Panc1 (cell line): ENCODE measurements at regions of chr9 and their contacts with region 1.

Region 1: GRCh38 chr9:100590481-100590880 is 12.6 kb downstream of the CAVIN4 start:
- DNase-seq: no peak
- ATAC-seq: no peak
- H3K4me3 ChIP-seq: no peak overlapping the region
- H3K27ac ChIP-seq: no peak overlapping the region
- H3K4me1 ChIP-seq: no peaks in the 10 kb centered on the region
- H3K27me3 ChIP-seq: no peaks in the 10 kb centered on the region
- CTCF ChIP-seq: no peak

Region 2: GRCh38 chr9:100437860-100438805 is 152.3 kb before region 1 on chr9:
- CTCF ChIA-PET with region 1: interaction called, 4 read pairs
- POLR2A ChIA-PET with region 1: no interaction called
- in situ Hi-C with region 1: no loop called
- intact Hi-C with region 1: loop called (anchors 5 kb)
- DNase-seq: no peak
- ATAC-seq: peak; percentile 53; the same call in 1 of the 2 replicates
- H3K4me3 ChIP-seq: no peak overlapping the region
- H3K27ac ChIP-seq: no peak overlapping the region
- H3K4me1 ChIP-seq: no peaks in the 10 kb centered on the region; the same call in 1 of the 2 replicates
- H3K27me3 ChIP-seq: no peaks in the 10 kb centered on the region
- CTCF ChIP-seq: peak; percentile 85

Region 3: GRCh38 chr9:100505564-100506159 is 84.8 kb before region 1 on chr9:
- CTCF ChIA-PET with region 1: no interaction called
- POLR2A ChIA-PET with region 1: no interaction called
- in situ Hi-C with region 1: no loop called
- intact Hi-C with region 1: loop called (anchors 5 kb)
- DNase-seq: peak; percentile 12
- ATAC-seq: no peak
- H3K4me3 ChIP-seq: no peak overlapping the region
- H3K27ac ChIP-seq: no peak overlapping the region
- H3K4me1 ChIP-seq: no peaks in the 10 kb centered on the region
- H3K27me3 ChIP-seq: no peaks in the 10 kb centered on the region
- CTCF ChIP-seq: peak; percentile 76